ENCODE measurements at regions of chr14 and their contacts with region 1.

Region 1: DNA sequence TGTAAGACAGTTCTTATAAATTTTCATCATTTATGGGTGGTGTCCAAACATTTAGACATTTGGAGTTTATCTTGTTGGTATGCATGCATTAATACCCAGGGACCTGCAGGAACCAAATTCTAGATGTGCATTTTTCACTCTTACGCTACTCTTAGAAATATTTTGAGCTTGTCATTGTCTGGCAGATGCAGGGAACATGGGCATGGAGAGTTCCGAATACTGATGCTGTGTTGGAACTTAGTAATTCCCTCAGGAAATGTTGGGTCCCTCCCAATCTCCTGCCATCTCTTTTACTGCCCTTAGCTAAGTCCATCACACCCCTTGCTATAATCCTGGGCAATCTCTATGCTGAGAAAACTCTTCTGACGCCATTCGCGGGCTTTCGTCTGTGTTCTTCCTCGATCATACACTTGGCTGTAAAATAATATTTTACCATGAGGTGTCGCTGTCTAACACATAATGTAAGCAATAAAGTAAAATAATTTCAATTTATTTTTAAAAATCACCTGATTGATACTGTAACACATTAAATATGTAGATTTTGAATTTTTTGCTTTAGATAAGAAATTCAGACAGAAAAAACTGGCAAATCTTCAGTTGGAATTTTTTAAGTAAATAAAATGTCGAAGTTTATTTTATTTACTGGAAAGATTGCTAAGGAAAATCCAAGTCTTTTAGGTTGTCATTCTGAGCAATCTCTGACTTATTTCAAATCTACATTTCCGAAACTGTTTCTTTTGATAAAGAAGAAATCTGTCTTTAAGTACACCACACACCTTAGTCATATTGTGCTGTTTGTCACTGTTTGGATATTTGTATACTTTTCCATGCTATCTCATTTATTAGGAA is 304.1 kb upstream of the SSTR1 start:
- DNase-seq: peak in 5 of 14 experiments; percentile 2 to 72 (median 57)
- ATAC-seq: peak; percentile 32
- H3K4me3 ChIP-seq: no peak overlapping the region
- H3K4me3 Mint-ChIP-seq: no peak overlapping the region
- H3K27ac ChIP-seq: no peak overlapping the region
- H3K27ac Mint-ChIP-seq: no peak overlapping the region
- H3K4me1 ChIP-seq: no peaks in the 10 kb centered on the region
- H3K4me1 Mint-ChIP-seq: no peaks in the 10 kb centered on the region
- H3K27me3 ChIP-seq: peaks cover 0 to 5% of the 10 kb centered on the region in 2 experiments
- H3K27me3 Mint-ChIP-seq: peaks cover 18% of the 10 kb centered on the region
- CTCF ChIP-seq: peak; percentile 52

Region 2: DNA sequence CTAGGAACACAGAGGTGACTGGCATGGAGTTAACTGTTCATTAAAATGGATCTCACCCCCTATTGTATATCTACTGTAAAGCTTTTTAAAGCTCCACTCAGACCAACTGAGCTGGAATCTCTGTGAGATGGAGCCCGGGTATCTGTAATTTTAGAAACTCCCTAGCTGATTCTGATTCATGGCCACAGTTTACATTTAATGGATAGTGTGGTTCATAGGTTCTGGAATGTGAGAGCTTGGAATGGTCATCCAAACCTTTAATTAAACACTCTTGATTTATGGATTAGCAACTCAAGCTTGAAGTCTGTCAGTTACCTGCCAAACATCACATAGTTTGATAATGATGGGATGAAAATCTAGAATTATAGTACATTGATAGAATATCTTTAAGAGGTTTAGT is 915.0 kb before region 1 on chr14:
- CTCF ChIA-PET with region 1: no interaction called
- POLR2A ChIA-PET with region 1: no interaction called
- intact Hi-C with region 1: no loop called
- DNase-seq: no peak
- ATAC-seq: no peak
- H3K4me3 ChIP-seq: no peak overlapping the region
- H3K4me3 Mint-ChIP-seq: no peak overlapping the region
- H3K27ac ChIP-seq: no peak overlapping the region
- H3K27ac Mint-ChIP-seq: no peak overlapping the region
- H3K4me1 ChIP-seq: no peaks in the 10 kb centered on the region
- H3K4me1 Mint-ChIP-seq: no peaks in the 10 kb centered on the region
- H3K27me3 ChIP-seq: no peaks in the 10 kb centered on the region
- H3K27me3 Mint-ChIP-seq: no peaks in the 10 kb centered on the region
- CTCF ChIP-seq: no peak

Region 3: DNA sequence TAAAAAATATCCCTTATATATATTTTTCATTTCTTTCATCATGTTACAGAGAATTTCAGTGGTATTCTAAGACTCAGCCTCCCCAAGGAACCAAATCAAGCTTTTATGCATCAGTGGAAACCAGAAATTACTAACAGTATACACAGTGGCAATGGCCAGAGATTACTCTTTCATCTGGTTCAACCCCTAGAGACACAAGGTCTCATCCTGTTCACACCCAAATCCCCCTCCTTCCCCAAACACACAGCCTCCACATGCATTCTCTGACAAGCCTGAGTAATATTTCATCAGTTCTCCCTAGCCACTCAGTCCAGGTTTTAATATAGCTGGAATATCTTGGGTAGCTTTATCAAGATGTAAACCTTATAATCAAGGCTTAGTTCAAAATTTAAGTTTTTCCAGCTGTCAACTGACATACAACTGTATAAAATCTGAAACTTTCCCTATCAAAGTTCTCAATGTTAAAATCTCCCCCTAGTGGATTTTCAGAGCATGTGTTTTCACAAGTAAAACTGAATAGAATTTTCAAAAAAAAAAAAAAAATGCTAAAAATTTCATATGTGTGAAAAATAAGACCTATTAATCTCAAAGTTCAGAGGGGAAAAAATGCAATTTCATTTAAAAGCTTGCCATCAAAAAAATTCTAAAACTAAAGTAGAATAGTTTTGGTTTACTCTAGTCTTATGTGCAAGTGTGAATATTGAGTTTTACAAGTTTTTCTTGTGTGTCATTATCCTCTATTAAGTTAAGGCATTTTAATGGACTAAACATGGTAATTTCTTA is 293.6 kb after region 1 on chr14:
- CTCF ChIA-PET with region 1: no interaction called
- POLR2A ChIA-PET with region 1: no interaction called
- intact Hi-C with region 1: loop called (anchors 1 kb)
- DNase-seq: peak in 3 of 14 experiments; percentile 28 to 44 (median 42)
- ATAC-seq: no peak
- H3K4me3 ChIP-seq: no peak overlapping the region
- H3K4me3 Mint-ChIP-seq: no peak overlapping the region
- H3K27ac ChIP-seq: no peak overlapping the region
- H3K27ac Mint-ChIP-seq: no peak overlapping the region
- H3K4me1 ChIP-seq: peaks cover 3% of the 10 kb centered on the region
- H3K4me1 Mint-ChIP-seq: peaks cover 5% of the 10 kb centered on the region
- H3K27me3 ChIP-seq: no peaks in the 10 kb centered on the region
- H3K27me3 Mint-ChIP-seq: no peaks in the 10 kb centered on the region
- CTCF ChIP-seq: peak; percentile 58

Region 4: GRCh38 chr14:38867561-38868150 is 964.1 kb after region 1 on chr14:
- CTCF ChIA-PET with region 1: no interaction called
- POLR2A ChIA-PET with region 1: no interaction called
- intact Hi-C with region 1: loop called in 1 of 2 experiments (anchors 2 kb)
- DNase-seq: peak in 13 of 14 experiments; percentile 9 to 77 (median 37)
- ATAC-seq: no peak
- H3K4me3 ChIP-seq: no peak overlapping the region
- H3K4me3 Mint-ChIP-seq: no peak overlapping the region
- H3K27ac ChIP-seq: no peak overlapping the region
- H3K27ac Mint-ChIP-seq: no peak overlapping the region
- H3K4me1 ChIP-seq: no peaks in the 10 kb centered on the region
- H3K4me1 Mint-ChIP-seq: no peaks in the 10 kb centered on the region
- H3K27me3 ChIP-seq: no peaks in the 10 kb centered on the region
- H3K27me3 Mint-ChIP-seq: peaks cover 12% of the 10 kb centered on the region
- CTCF ChIP-seq: peak; percentile 75